Activated T-helper 2 cell treated with anti-CD3 and anti-CD28 coated beads, Interferon-gamma antibody, Interleukin-2, Interleukin-4, amounts not matched to agents 10 μg/mL and 5 μg/mL and 100 μg/mL, durations not matched to agents 14 hours and 24 hours and 36 hours (primary cell): ENCODE measurements at regions of chr17 and their contacts with region 1.

Region 1: DNA sequence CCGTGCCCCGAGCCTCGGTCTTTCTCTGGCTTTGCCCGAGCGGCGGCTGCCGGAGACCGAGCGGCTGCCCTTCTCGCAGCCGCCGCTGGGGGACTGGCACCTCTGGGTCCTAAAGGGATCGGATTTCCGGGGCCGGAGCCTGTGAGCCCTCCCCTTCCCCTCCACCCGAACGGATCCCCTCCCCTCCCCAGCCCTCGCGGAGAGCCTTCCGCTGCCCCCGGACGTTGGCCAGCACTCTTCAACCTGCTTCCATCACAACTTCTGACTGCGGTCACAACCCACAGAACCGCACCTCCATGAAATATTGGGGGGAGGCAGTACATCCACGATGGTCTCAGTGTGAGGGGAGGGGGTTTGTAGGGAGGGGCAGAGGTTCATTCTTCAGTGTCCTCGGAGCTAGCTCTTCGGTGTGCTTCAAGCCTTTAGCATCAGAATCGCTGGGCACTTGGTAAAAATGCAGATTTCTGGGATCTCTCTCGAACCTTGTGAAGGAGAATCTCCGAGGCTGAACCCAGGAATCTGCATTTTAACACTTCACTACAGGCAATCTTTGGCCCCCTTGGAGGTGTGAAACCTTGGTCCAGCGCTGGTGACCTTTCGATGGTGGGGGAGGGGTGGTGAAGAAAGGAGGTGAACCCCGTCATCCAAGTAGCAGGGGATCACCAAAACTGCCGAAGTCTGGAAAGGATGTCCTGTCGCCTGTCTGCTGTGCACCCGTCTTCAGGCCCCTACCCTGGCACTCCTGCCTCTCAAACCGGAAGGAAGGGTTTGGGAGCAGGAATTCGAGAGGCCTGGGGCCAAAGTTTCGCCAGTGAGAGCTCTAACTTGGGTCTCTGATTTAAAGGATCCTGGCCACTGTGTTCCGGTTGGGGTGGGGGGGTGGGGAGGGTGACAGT is 812 bp upstream of the PPP1R9B start:
- DNase-seq: peak; percentile 85
- H3K4me3 Mint-ChIP-seq: peak overlapping the region; percentile 84
- H3K27ac Mint-ChIP-seq: peak overlapping the region; percentile 97
- H3K4me1 Mint-ChIP-seq: peaks cover 36% of the 10 kb centered on the region
- H3K27me3 Mint-ChIP-seq: no peaks in the 10 kb centered on the region

Region 2: DNA sequence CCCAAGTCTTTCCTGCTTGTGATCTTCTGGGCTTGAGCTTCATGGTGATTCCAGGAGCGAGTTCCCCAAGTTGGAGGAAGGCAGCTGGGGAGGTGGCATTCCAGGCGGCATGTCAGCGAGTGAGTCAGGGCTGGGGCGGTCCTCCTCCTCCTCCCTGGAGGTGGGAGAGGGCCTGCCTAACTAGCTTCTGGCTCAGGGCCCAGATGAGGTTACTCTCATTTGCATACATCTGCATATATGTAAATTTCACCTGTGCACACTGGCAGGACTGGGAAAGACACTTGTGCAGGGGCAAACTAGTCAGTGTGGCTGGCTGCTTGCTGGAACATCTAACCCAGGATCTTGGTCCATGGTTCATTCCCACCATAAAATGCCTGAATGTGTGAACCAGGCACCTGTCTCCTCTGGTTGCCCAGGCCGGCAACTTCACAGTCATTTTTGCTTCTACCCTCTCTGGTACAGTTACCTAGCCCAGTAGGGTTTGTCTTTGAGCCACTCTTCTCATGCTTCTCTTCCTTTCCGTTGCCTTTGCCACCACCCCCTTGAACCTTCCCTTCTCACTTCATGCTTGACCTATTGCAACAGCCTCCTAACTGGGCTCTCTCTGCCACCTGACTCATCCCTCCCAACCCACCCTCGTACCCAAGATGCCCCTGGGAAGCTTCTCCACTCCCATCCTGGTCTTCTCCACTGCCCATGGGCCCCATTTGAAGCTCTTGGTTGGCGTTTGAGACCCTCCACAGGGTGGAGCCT is 191.9 kb before region 1 on chr17:
- intact Hi-C with region 1: no loop called
- DNase-seq: no peak
- H3K4me3 Mint-ChIP-seq: no peak overlapping the region
- H3K27ac Mint-ChIP-seq: no peak overlapping the region
- H3K4me1 Mint-ChIP-seq: peaks cover 6% of the 10 kb centered on the region
- H3K27me3 Mint-ChIP-seq: peaks cover 46% of the 10 kb centered on the region

Region 3: GRCh38 chr17:50094753-50095619 is 56.3 kb before region 1 on chr17 and contains the start of gene PDK2:
- intact Hi-C with region 1: loop called (anchors 5 kb)
- DNase-seq: peak; percentile 95
- H3K4me3 Mint-ChIP-seq: peak within 1 kb of the TSS; percentile 86
- H3K27ac Mint-ChIP-seq: peak within 1 kb of the TSS; percentile 79
- H3K4me1 Mint-ChIP-seq: peaks cover 13% of the 10 kb centered on the region
- H3K27me3 Mint-ChIP-seq: no peaks in the 10 kb centered on the region
- total RNA-seq, gene PDK2: 11.0 and 12.1 TPM in 2 replicates

Region 4: GRCh38 chr17:50139950-50140871 is 11.1 kb before region 1 on chr17:
- intact Hi-C with region 1: loop called (anchors 1 kb)
- DNase-seq: peak; percentile 77
- H3K4me3 Mint-ChIP-seq: peak overlapping the region; percentile 67
- H3K27ac Mint-ChIP-seq: peak overlapping the region; percentile 77
- H3K4me1 Mint-ChIP-seq: peaks cover 63% of the 10 kb centered on the region
- H3K27me3 Mint-ChIP-seq: no peaks in the 10 kb centered on the region

Region 5: GRCh38 chr17:50177983-50178834 is 26.9 kb after region 1 on chr17:
- intact Hi-C with region 1: no loop called
- DNase-seq: no peak
- H3K4me3 Mint-ChIP-seq: no peak overlapping the region
- H3K27ac Mint-ChIP-seq: peak overlapping the region; percentile 18
- H3K4me1 Mint-ChIP-seq: peaks cover 12% of the 10 kb centered on the region
- H3K27me3 Mint-ChIP-seq: peaks cover 2% of the 10 kb centered on the region

Region 6: GRCh38 chr17:50188720-50189549 is 37.6 kb after region 1 on chr17:
- intact Hi-C with region 1: no loop called
- DNase-seq: no peak
- H3K4me3 Mint-ChIP-seq: no peak overlapping the region
- H3K27ac Mint-ChIP-seq: no peak overlapping the region
- H3K4me1 Mint-ChIP-seq: peaks cover 4% of the 10 kb centered on the region
- H3K27me3 Mint-ChIP-seq: no peaks in the 10 kb centered on the region

Region 7: DNA sequence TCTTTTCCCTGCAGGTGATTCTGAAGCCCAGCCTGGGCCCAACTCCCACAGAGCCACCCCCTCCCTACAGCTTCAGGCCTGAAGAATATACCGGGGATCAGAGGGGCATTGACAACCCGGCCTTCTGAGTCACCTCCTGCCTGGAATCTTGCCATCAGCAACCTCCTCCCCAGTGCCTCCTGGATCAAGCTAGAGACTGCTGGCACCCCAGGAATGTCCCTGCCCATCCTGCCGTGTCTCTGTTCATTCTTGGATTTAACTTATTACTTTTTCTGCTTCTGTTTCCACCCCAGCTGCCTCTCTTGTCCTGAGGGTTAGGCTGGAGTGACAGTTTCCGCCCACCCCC is 127.9 kb after region 1 on chr17:
- intact Hi-C with region 1: no loop called
- DNase-seq: no peak
- H3K4me3 Mint-ChIP-seq: no peak overlapping the region
- H3K27ac Mint-ChIP-seq: no peak overlapping the region
- H3K4me1 Mint-ChIP-seq: peaks cover 41% of the 10 kb centered on the region
- H3K27me3 Mint-ChIP-seq: no peaks in the 10 kb centered on the region